ENCODE measurements at regions of chr17 and their contacts with region 1.

Region 1: DNA sequence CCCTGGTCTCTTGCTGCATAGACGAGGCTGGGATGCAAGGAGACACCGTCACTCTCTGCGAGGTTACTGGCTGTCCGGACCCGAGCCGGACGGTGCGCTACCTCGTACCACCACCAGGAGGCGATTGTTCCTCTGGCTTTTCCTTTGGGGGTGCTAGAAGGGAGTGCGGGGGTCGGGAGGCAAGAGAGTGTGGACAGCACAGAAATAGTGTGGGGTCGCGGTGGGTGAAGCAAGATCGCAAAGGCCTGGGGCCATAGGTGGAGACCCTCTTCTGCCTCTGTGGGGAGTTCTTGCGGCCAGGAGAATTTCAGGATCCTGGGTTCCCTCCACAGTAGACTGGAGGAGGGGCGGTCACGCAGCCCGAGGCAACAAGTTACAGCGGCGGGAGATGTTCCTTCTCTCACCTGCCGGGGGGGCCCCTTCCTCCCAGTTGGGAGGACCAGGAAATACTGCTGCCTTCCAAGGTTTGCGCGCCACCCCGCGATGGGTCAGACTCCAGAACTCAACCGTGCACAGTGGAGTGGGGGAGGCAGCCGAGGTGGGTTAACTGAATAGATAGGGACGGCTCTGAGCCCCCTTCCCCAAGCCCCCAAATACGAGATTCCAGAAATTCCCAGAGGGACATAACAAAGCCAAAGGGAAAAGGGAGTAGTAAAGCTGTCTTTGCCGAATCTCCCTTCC is 6.9 kb downstream of the PHOSPHO1 start:
- DNase-seq: no peak
- ATAC-seq: peak; percentile 28
- H3K4me3 ChIP-seq: peak overlapping the region; percentile 48; the same call in 1 of the 2 replicates
- H3K27ac ChIP-seq: no peak overlapping the region
- H3K4me1 ChIP-seq: peaks cover 41% of the 10 kb centered on the region
- H3K27me3 ChIP-seq: no peaks in the 10 kb centered on the region
- CTCF ChIP-seq: peak; percentile 66 to 88 (median 86)
- EP300 ChIP-seq: no peak
- POLR2A ChIP-seq: peak; percentile 63
- RAD21 ChIP-seq: peak; percentile 42

Region 2: DNA sequence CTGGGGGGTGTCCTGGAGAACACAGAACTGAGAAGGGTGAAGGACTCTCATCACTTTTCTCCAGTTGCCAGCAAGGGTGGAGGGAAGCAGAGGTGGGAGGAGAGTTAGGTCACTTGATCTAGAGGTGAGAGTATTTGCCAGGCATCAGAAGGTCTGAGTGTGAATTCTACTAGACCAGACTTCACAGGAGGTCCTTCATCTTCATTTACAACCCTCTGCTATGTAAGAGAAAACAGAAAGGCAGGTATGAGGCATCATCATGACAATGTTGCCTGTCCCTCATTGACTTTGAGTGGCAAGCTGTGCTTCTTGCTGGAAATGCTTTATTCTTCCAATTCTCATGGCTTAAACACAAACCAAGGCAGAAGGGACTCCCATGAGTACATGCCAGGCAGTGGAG is 137.0 kb before region 1 on chr17:
- CTCF ChIA-PET with region 1: no interaction called
- POLR2A ChIA-PET with region 1: no interaction called
- RAD21 ChIA-PET with region 1: no interaction called
- SMC1A ChIA-PET with region 1: no interaction called
- in situ Hi-C with region 1: no loop called
- intact Hi-C with region 1: no loop called
- DNase-seq: no peak
- ATAC-seq: no peak
- H3K4me3 ChIP-seq: no peak overlapping the region
- H3K27ac ChIP-seq: no peak overlapping the region
- H3K4me1 ChIP-seq: no peaks in the 10 kb centered on the region
- H3K27me3 ChIP-seq: no peaks in the 10 kb centered on the region; a peak in 2 of 4 replicates
- CTCF ChIP-seq: no peak
- EP300 ChIP-seq: no peak
- POLR2A ChIP-seq: no peak
- RAD21 ChIP-seq: no peak

Region 3: DNA sequence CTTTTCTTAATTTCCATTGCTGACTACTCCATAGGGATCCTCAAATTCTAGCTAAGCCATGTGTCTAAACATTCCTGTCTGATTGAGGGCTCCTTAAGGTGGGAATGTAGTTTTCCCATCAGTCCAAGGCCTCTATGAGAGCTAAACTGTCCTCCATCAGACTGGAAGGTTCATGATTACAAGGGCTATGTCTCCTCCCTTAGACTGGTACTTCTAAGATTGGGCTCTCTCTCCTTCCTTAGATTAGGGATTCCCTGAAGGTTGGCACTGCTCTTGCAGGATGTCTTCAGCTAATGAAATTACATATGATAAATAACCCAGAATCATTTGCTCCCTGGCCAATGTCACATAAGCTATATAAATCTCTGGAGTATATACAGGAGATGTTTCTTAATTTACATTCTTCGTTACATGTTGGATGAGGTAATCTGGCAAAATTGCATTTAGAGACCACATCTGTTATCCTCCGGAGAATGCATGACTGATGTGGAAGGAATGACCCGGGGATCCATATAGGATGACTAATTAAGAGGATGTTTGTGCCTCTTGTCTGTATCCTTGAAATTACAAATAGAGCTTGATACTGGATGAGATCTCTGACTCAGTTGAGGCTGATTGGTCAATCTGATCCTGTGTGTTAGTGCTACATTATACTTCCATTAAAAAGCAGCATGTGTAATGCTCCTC is 76.9 kb before region 1 on chr17:
- CTCF ChIA-PET with region 1: no interaction called
- POLR2A ChIA-PET with region 1: no interaction called
- RAD21 ChIA-PET with region 1: no interaction called
- SMC1A ChIA-PET with region 1: no interaction called
- in situ Hi-C with region 1: no loop called
- intact Hi-C with region 1: no loop called
- DNase-seq: no peak
- ATAC-seq: no peak
- H3K4me3 ChIP-seq: no peak overlapping the region
- H3K27ac ChIP-seq: no peak overlapping the region
- H3K4me1 ChIP-seq: no peaks in the 10 kb centered on the region
- H3K27me3 ChIP-seq: peaks cover 0 to 3% of the 10 kb centered on the region in 2 experiments; a peak in 1 of 4 replicates
- CTCF ChIP-seq: no peak
- EP300 ChIP-seq: no peak
- POLR2A ChIP-seq: no peak
- RAD21 ChIP-seq: no peak

Region 4: DNA sequence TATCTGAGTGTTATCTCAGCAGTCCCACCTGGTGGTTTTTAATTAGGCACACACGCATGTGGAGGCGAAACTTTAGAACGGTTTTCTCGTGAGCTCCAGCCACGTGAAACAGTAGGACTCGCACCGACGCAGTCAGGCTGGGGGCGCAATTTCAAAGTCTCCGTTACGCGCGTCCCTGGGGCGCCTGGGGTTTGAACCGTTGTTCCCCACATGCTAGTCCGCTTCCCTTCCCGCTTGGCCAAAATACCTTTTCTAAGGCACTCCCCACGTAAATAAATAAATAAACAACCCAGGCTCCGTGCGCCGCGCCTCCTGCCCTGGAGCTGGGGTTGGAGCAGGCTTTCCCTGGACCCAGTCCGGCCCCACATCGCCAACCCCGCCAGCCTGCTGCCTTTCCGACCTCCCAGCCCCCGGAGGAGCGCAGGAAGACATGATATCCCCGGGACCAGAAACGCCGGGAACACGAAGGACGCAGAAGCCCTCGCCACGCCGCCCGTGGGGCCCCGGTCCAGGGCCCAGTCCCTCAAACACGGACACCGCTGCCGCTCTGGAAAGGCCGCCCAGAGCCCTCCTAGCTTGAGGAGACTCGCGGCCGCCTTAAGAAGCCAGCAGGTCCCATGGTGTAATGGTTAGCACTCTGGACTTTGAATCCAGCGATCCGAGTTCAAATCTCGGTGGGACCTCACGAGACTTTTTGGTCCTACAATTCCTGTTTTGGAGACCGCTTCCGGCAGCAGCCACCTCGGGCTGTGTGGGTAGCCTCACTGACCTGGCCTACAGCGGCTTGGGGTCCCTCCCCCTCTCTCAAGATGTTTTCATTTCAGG is 31.5 kb before region 1 on chr17:
- CTCF ChIA-PET with region 1: interaction called, 127 read pairs
- POLR2A ChIA-PET with region 1: interaction called, 537 read pairs
- RAD21 ChIA-PET with region 1: interaction called, 355 read pairs
- SMC1A ChIA-PET with region 1: interaction called, 354 read pairs
- in situ Hi-C with region 1: no loop called
- intact Hi-C with region 1: loop called (anchors 1 kb)
- DNase-seq: peak; percentile 77
- ATAC-seq: peak; percentile 63
- H3K4me3 ChIP-seq: peak overlapping the region; percentile 85
- H3K27ac ChIP-seq: peak overlapping the region; percentile 98
- H3K4me1 ChIP-seq: peaks cover 28% of the 10 kb centered on the region
- H3K27me3 ChIP-seq: no peaks in the 10 kb centered on the region
- CTCF ChIP-seq: peak; percentile 32 to 54 (median 37); a peak in 4 of 6 replicates
- EP300 ChIP-seq: peak in 1 of 2 experiments; percentile 72; a peak in 1 of 4 replicates
- POLR2A ChIP-seq: peak; percentile 24; the same call in 1 of the 2 replicates
- RAD21 ChIP-seq: peak; percentile 14; the same call in 1 of the 2 replicates

Region 5: DNA sequence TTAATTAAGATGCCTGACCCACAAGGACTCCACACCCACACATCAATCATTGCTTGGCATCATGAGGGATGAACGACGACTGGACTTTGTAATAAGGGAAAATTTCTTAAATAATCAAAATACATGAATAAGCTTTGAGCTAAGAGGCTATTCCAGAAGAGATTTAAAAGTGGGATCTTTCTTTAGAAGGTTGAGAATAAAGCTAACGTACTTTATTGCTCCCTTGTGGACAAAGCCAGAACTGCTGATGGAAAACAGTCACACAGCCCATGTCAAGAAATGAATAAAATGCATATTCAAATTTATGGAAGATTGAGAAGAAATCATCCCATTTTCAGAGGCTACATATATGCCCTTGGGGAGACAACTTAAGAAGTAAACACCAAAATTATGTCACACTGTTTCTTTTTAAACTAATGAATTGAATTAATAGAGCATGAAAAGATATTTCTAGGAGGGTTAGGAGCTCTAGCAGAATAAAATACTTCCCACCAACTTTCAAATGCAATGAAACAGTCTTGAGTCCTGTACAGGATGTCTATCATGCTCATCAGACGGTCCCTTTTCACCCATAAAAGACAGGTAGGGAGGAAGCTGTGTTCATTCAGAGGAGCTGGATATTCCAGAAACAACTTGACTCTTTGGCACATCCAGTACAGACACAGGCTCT is 67.2 kb after region 1 on chr17:
- CTCF ChIA-PET with region 1: interaction called, 13 read pairs
- POLR2A ChIA-PET with region 1: no interaction called
- RAD21 ChIA-PET with region 1: no interaction called
- SMC1A ChIA-PET with region 1: no interaction called
- in situ Hi-C with region 1: no loop called
- intact Hi-C with region 1: no loop called
- DNase-seq: no peak
- ATAC-seq: peak; percentile 41; the same call in 1 of the 3 replicates
- H3K4me3 ChIP-seq: no peak overlapping the region
- H3K27ac ChIP-seq: no peak overlapping the region
- H3K4me1 ChIP-seq: no peaks in the 10 kb centered on the region
- H3K27me3 ChIP-seq: no peaks in the 10 kb centered on the region
- CTCF ChIP-seq: peak; percentile 48 to 62 (median 56); a peak in 4 of 6 replicates
- EP300 ChIP-seq: no peak
- POLR2A ChIP-seq: no peak
- RAD21 ChIP-seq: peak; percentile 56

Measured in GM12878 (cell line).